Psoas muscle (tissue), 8 donors: ENCODE measurements at regions of chr13 and their contacts with region 1.

Region 1: DNA sequence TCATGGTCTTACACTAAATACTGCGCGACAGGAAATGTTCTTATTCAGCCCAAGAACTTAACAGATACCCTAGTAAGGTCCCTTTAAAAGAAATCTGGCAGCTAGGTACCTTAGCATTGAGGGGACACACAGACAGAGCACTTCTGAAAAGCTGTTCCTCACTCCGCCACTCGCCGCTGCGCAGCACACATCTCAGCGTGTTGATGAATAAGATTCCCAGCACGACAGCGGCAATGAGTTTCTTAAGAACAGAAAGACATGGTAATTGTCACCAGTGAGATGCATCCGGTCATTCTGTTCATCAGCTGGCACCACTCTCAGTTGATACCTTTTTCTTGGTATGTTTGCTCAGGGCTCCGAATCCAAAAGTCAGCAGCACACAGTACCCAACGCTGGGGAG is 39.9 kb downstream of the TMTC4 start:
- DNase-seq: no peak
- ATAC-seq: no peak
- H3K4me3 ChIP-seq: no peak overlapping the region
- H3K27ac ChIP-seq: no peak overlapping the region
- H3K4me1 ChIP-seq: no peaks in the 10 kb centered on the region
- H3K27me3 ChIP-seq: no peaks in the 10 kb centered on the region
- CTCF ChIP-seq: no peak

Region 2: GRCh38 chr13:100394005-100394695 is 240.5 kb before region 1 on chr13:
- intact Hi-C with region 1: no loop called
- DNase-seq: no peak
- ATAC-seq: peak in 1 of 4 donors; percentile 28
- H3K4me3 ChIP-seq: no peak overlapping the region
- H3K27ac ChIP-seq: peak overlapping the region; percentile 62
- H3K4me1 ChIP-seq: no peaks in the 10 kb centered on the region
- H3K27me3 ChIP-seq: no peaks in the 10 kb centered on the region
- CTCF ChIP-seq: no peak

Region 3: GRCh38 chr13:100611678-100612492 is 22.8 kb before region 1 on chr13:
- intact Hi-C with region 1: loop called in 1 of 2 experiments (anchors 1 kb)
- DNase-seq: no peak
- ATAC-seq: peak; percentile 30 to 91 (median 84)
- H3K4me3 ChIP-seq: no peak overlapping the region
- H3K27ac ChIP-seq: no peak overlapping the region
- H3K4me1 ChIP-seq: peaks cover 5% of the 10 kb centered on the region
- H3K27me3 ChIP-seq: no peaks in the 10 kb centered on the region
- CTCF ChIP-seq: no peak

Region 4: DNA sequence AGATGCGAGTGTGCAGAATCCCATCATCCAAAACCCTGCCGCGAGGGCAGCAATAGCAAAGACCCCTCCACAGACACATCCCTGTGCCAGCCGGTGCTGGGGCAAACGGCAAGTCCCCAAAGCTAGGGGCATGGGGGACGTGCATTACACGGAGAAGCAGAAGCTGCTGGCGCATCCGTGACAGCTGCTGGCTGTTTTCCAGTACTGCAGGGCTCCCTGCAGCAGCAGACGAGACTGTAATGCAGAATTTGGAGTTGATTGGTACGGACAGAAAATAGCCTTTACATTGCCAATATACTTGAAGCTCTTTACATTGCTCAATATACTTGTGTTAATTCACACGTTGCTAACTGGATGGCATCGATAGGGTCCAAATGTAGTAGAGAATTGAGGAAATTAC is 117.1 kb after region 1 on chr13:
- intact Hi-C with region 1: no loop called
- DNase-seq: no peak
- ATAC-seq: no peak
- H3K4me3 ChIP-seq: no peak overlapping the region
- H3K27ac ChIP-seq: no peak overlapping the region
- H3K4me1 ChIP-seq: no peaks in the 10 kb centered on the region
- H3K27me3 ChIP-seq: peaks cover 0 to 6% (median 0%) of the 10 kb centered on the region in 3 donors
- CTCF ChIP-seq: no peak